ENCODE measurements at regions of chr1 and their contacts with region 1.

Region 1: DNA sequence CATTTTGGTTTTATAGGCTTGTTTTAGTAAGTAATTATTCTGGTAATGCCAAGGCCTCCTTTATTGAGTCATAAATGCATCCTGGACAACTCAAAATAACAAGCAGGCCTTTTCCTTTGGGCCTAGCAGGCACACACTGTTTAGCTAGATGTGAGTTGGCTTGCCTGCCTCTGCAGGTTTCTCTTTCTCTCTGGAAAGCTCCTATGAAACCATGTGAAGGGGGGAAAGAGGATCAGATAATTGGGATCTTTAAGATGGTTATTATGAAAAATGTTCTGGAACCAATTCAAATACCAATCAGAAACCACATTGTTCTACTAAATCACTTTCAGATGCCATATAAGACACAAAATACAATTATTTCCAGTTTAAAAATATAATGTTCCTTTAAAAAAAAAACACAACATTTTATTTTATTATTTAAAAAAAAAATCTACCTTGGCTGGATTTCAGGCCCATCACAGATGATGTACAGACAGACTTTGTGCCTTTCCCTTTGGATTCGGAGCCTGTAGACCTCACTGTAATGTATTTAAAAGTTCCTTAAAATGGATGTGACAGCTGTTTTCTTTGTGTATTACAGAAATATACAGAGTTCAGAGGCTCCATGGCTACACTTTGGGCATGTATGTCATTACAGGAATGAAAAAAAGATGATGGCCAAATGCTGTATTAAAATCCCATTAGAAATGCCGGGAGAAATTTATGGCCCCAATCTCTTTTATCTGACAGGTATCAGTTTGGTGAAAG is 80.2 kb downstream of the NTMT2 start:
- DNase-seq: no peak
- ATAC-seq: no peak
- H3K4me3 ChIP-seq: no peak overlapping the region
- H3K27ac ChIP-seq: no peak overlapping the region
- H3K4me1 ChIP-seq: no peaks in the 10 kb centered on the region
- H3K27me3 ChIP-seq: no peaks in the 10 kb centered on the region
- CTCF ChIP-seq: no peak
- POLR2A ChIP-seq: no peak
- RAD21 ChIP-seq: no peak

Region 2: DNA sequence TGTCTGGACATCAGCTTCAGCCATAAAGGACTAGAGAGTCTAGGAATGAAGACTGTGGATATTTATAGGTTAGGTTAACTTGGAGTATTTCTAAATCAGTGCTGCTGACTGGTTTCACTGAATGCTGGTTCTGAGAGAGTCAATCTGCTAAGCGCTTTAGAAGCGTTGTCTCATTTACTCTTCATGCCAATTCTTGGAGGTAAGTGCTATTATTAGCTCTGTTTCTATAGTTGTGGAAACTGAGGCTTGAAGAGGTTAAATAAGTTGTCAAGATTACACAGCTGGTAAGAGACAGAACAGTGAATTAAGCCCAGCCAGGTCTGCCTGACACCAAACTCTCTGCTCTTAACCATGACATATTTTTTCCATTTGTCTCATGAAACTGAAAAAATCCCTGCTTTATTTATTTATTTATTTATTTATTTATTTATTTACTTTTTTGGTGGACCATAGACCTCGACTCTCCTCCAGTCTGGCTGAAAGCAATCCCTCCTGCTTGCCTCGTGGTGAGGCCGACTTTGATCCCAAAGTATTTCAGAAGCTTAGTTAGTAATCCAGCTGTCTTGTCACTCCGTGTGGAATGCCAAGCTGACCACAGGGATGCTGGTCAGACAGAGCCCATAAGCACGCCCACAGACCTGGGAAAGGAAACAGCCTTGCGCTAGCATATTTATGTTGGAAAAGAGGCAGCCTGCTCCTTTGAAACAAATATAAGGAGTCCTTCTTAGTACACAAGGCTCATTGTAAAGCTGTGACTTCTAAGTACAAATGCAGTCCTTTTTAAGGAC is 63.3 kb before region 1 on chr1:
- CTCF ChIA-PET with region 1: no interaction called
- POLR2A ChIA-PET with region 1: no interaction called
- dilution Hi-C with region 1: no loop called
- in situ Hi-C with region 1: no loop called
- intact Hi-C with region 1: loop called (anchors 5 kb)
- DNase-seq: peak; percentile 96
- ATAC-seq: peak; percentile 100
- H3K4me3 ChIP-seq: no peak overlapping the region
- H3K27ac ChIP-seq: no peak overlapping the region
- H3K4me1 ChIP-seq: 0 out of 2 replicates have a peak, but pooled peaks cover 2% of the 10 kb centered on the region
- H3K27me3 ChIP-seq: no peaks in the 10 kb centered on the region
- CTCF ChIP-seq: no peak
- POLR2A ChIP-seq: no peak
- RAD21 ChIP-seq: no peak; the same call in 1 of the 2 replicates

Region 3: DNA sequence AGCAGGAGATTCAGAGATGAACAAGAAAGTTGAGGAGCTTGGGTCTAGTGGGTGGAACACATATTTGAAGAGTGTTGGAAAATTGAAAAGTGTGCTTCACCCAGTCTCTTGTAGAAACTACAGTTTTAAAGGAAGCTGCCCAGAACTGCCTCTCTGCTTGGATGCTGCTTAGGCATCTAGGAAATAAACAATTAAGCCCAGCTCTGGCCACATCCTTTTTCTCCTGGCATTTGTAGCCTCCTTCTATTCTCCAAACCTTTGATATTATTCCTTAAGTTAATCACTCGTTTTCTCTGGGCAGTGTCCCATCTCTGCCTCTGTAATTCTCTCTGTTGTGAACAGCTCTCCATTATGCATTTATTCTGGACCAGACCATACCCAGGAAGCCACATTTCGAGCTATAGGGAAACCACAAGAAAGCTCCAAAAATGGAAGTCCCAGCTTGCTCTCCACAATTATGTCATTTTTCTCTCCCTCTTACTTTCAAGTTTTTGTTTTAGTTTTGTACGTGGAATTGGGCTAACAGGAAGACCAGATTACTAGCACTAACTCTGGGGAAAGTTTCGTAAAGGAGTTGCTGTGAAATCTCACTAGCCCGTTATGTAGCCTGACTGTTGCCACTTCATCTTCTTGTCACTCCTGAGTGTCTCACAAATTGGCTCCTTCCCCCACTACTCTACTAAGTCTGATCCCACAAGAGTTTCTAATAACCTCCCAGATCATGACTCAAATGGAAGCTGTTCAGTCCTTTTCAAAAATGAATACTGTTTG is 22.0 kb after region 1 on chr1:
- CTCF ChIA-PET with region 1: no interaction called
- POLR2A ChIA-PET with region 1: no interaction called
- dilution Hi-C with region 1: no loop called
- in situ Hi-C with region 1: no loop called
- intact Hi-C with region 1: no loop called
- DNase-seq: no peak
- ATAC-seq: peak; percentile 46
- H3K4me3 ChIP-seq: no peak overlapping the region
- H3K27ac ChIP-seq: no peak overlapping the region
- H3K4me1 ChIP-seq: no peaks in the 10 kb centered on the region
- H3K27me3 ChIP-seq: no peaks in the 10 kb centered on the region
- CTCF ChIP-seq: no peak
- POLR2A ChIP-seq: no peak
- RAD21 ChIP-seq: no peak

Region 4: GRCh38 chr1:170461762-170462384 is 235.9 kb after region 1 on chr1:
- CTCF ChIA-PET with region 1: no interaction called
- POLR2A ChIA-PET with region 1: no interaction called
- dilution Hi-C with region 1: no loop called
- in situ Hi-C with region 1: no loop called
- intact Hi-C with region 1: no loop called
- DNase-seq: peak; percentile 75
- ATAC-seq: no peak
- H3K4me3 ChIP-seq: no peak overlapping the region
- H3K27ac ChIP-seq: no peak overlapping the region
- H3K4me1 ChIP-seq: 0 out of 2 replicates have a peak, but pooled peaks cover 2% of the 10 kb centered on the region
- H3K27me3 ChIP-seq: no peaks in the 10 kb centered on the region
- CTCF ChIP-seq: no peak
- POLR2A ChIP-seq: no peak
- RAD21 ChIP-seq: no peak

Measured in IMR-90 (cell line).